Heart left ventricle (tissue), 16 donors: ENCODE measurements at regions of chr6 and their contacts with region 1.

Region 1: GRCh38 chr6:169831450-169832246 is 80.2 kb downstream of the ERMARD start:
- DNase-seq: peak; percentile 71 to 91 (median 75)
- ATAC-seq: peak; percentile 78 to 92 (median 88)
- H3K4me3 ChIP-seq: no peak overlapping the region
- H3K27ac ChIP-seq: no peak overlapping the region
- H3K4me1 ChIP-seq: peaks cover 0 to 15% (median 5%) of the 10 kb centered on the region in 12 donors
- H3K27me3 ChIP-seq: peaks cover 0 to 20% (median 0%) of the 10 kb centered on the region in 9 donors
- CTCF ChIP-seq: peak; percentile 85 to 97 (median 93)
- POLR2A ChIP-seq: no peak

Region 2: DNA sequence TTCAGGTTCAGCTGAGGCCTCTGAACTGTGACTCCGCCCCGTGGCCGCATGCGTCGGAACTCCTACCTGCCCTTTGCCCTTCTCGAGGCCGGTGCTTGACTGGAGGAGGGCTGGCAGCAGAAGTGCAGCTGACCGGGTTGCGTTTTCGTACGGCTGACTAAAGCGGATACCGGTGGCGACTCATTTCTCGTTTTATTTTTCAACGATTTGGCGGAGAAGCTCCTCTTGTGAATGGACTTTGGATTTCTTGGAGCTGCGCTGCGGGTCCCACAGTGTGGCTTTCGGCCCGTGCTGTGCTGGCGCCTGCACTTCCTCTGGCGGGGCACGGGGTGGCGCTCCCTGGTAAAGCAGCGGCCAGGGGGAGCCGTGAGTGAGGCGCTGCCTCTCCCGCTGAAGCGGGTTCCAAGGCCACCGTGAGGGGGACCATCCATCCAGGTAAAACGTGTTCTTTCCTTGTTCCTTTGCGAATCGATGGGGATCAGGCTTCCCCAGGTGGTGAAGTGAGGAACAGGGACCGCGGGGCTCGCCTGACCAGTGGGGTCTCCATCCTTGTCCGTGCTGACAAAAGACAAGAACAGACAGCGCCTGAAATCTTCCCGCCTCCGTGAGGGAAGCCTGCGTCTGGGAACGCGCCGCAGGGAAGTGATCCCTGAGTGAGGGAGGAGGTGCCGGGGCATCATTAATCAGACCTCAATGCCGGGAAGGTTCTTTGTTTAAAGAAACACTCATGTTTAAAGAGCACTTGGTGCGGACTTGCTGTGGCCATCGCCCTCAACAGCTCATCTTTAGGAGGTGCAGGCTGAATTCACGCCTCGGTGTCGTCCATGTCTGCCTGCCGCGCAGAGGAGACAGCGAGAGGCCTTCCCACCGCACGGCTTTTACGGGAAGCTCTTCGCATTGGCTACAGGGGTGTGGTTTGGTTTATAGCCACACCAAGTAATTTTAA is 41.4 kb before region 1 on chr6:
- intact Hi-C with region 1: no loop called
- DNase-seq: peak; percentile 68 to 89 (median 71)
- ATAC-seq: peak; percentile 88 to 98 (median 96)
- H3K4me3 ChIP-seq: peak overlapping the region in 11 of 12 donors; percentile 14 to 63 (median 49)
- H3K27ac ChIP-seq: peak overlapping the region in 9 of 12 donors; percentile 10 to 82 (median 54)
- H3K4me1 ChIP-seq: peaks cover 0 to 18% (median 13%) of the 10 kb centered on the region in 12 donors
- H3K27me3 ChIP-seq: peaks cover 0 to 13% (median 0%) of the 10 kb centered on the region in 9 donors
- CTCF ChIP-seq: peak; percentile 87 to 98 (median 96)
- POLR2A ChIP-seq: no peak

Region 3: GRCh38 chr6:169933839-169934698 is 102.4 kb after region 1 on chr6:
- intact Hi-C with region 1: loop called in 2 of 10 experiments (anchors 5 to 10 kb)
- DNase-seq: peak; percentile 62 to 79 (median 64)
- ATAC-seq: peak; percentile 65 to 92 (median 79)
- H3K4me3 ChIP-seq: no peak overlapping the region
- H3K27ac ChIP-seq: peak overlapping the region in 1 of 12 donors; percentile 46
- H3K4me1 ChIP-seq: peaks cover 0 to 17% (median 4%) of the 10 kb centered on the region in 12 donors
- H3K27me3 ChIP-seq: peaks cover 0 to 30% (median 6%) of the 10 kb centered on the region in 9 donors
- CTCF ChIP-seq: no peak
- POLR2A ChIP-seq: no peak

Region 4: DNA sequence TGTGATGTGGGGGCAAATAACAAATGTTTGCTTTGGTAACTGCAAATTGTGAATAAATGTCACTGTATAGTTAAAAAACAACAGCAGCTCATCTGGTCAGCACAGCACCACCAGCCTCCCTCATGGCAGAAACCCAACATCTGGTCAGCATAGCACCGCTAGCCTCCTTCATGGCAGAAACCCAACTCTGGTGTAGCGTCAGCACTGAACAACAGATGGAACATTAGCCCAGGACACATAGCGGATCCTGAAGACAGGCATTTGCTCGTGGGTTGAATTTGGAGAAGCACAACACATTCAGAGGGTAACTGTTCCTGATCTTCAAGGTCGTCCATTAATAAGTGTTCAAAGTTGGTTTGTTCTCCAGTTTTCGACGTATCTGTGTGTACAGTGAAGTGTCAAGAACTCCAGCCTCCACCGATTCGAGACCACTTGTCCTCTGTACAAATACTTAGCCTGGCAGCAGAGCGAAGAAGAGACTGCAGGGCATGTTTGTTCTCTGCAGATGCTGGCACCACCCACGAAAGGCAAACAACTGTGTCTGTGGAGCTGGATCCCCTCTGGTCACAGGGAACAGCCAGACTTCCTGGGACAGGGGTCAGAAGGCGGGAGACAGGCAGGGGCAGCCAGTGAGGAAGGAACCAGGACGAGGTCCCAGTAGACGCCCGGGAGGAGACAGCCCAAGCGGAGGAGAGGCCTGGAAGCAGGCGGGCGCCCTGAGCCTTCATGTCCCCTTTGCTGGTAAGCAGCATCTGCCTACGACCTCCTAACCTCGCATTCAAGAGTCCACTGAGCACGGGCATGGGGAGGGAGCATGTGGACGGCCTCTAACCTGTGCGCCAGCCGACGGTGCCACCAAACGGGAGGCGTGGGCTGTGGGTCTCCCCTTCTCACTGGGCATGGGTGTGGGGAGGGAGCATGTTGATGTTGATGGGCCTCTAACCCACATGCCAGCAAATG is 193.6 kb after region 1 on chr6:
- intact Hi-C with region 1: loop called in 1 of 10 experiments (anchors 10 kb)
- DNase-seq: peak in 2 of 5 donors; percentile 41 to 80
- ATAC-seq: peak; percentile 39 to 75 (median 54)
- H3K4me3 ChIP-seq: no peak overlapping the region
- H3K27ac ChIP-seq: peak overlapping the region in 2 of 12 donors; percentile 8 to 55
- H3K4me1 ChIP-seq: peaks cover 0 to 14% (median 3%) of the 10 kb centered on the region in 12 donors
- H3K27me3 ChIP-seq: peaks cover 0 to 13% (median 4%) of the 10 kb centered on the region in 9 donors
- CTCF ChIP-seq: no peak
- POLR2A ChIP-seq: no peak

Region 5: DNA sequence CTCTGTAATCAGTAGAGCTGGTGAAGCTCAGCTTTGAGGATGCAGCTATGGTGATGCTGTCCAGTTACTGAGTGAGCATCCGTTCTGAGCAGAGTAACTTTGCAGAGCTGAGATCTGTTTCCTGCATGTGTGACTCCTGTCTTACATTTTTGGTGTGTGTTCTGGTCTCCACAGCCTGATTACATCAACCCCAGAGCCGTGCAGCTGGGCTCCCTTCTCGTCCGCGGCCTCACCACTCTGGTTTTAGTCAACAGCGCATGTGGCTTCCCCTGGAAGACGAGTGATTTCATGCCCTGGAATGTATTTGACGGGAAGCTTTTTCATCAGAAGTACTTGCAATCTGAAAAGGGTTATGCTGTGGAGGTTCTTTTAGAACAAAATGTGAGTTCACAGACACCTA is 556.5 kb after region 1 on chr6:
- intact Hi-C with region 1: loop called in 1 of 10 experiments (anchors 10 kb)
- DNase-seq: no peak
- ATAC-seq: no peak
- H3K4me3 ChIP-seq: no peak overlapping the region
- H3K27ac ChIP-seq: no peak overlapping the region
- H3K4me1 ChIP-seq: peaks cover 0 to 10% (median 6%) of the 10 kb centered on the region in 12 donors
- H3K27me3 ChIP-seq: no peaks in the 10 kb centered on the region
- CTCF ChIP-seq: no peak
- POLR2A ChIP-seq: no peak

Region 6: DNA sequence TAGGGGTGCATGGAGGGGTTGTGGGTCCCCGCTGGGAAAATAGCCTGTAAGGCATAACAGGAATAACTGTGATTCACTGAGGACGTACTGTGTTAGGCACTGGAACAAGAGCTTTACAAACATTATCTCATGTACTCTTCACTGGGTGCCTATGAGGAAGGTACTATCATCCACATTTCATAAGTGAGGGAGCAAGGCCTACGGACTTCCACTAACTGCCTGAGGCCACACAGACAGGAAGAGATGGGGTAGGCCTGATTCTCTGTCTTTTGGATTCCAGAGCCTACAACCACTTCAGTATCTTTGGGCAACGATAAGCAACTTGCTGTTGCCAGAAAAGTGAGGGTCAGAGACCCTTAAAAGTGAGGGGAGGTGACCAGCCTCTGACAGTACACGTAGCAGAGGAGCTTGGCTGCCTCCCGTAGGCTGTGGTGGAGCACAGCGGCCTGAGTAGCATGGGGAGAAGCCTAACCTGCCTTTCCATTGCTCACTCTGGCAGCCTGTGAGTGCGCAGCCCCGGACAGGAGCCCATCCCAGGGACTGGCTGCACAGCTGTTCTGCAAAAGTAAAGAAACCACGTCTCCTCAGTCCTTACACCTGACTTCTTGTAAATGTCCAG is 691.0 kb after region 1 on chr6:
- intact Hi-C with region 1: loop called in 7 of 10 experiments (anchors 1 to 5 kb)
- DNase-seq: peak in 2 of 5 donors; percentile 24 to 38
- ATAC-seq: peak in 3 of 4 donors; percentile 48 to 56 (median 51)
- H3K4me3 ChIP-seq: no peak overlapping the region
- H3K27ac ChIP-seq: peak overlapping the region in 11 of 12 donors; percentile 2 to 88 (median 73)
- H3K4me1 ChIP-seq: peaks cover 0 to 28% (median 21%) of the 10 kb centered on the region in 12 donors
- H3K27me3 ChIP-seq: no peaks in the 10 kb centered on the region
- CTCF ChIP-seq: peak in 4 of 12 donors; percentile 5 to 37 (median 29)
- POLR2A ChIP-seq: no peak